ENCODE measurements at regions of chr4 and their contacts with region 1.

Region 1: GRCh38 chr4:153791746-153792617 is 3.1 kb upstream of the SFRP2 start:
- DNase-seq: peak; percentile 77
- ATAC-seq: peak; percentile 22
- H3K4me3 Mint-ChIP-seq: peak overlapping the region; percentile 67
- H3K27ac Mint-ChIP-seq: no peak overlapping the region
- H3K4me1 Mint-ChIP-seq: peaks cover 45% of the 10 kb centered on the region
- H3K27me3 Mint-ChIP-seq: peaks cover 79% of the 10 kb centered on the region

Region 2: GRCh38 chr4:153940916-153941315 is 148.9 kb after region 1 on chr4:
- CTCF ChIA-PET with region 1: no interaction called
- POLR2A ChIA-PET with region 1: no interaction called
- intact Hi-C with region 1: loop called in 1 of 2 experiments (anchors 5 kb)
- DNase-seq: no peak
- ATAC-seq: no peak
- H3K4me3 Mint-ChIP-seq: no peak overlapping the region
- H3K27ac Mint-ChIP-seq: no peak overlapping the region
- H3K4me1 Mint-ChIP-seq: peaks cover 15% of the 10 kb centered on the region
- H3K27me3 Mint-ChIP-seq: peaks cover 41% of the 10 kb centered on the region

Region 3: DNA sequence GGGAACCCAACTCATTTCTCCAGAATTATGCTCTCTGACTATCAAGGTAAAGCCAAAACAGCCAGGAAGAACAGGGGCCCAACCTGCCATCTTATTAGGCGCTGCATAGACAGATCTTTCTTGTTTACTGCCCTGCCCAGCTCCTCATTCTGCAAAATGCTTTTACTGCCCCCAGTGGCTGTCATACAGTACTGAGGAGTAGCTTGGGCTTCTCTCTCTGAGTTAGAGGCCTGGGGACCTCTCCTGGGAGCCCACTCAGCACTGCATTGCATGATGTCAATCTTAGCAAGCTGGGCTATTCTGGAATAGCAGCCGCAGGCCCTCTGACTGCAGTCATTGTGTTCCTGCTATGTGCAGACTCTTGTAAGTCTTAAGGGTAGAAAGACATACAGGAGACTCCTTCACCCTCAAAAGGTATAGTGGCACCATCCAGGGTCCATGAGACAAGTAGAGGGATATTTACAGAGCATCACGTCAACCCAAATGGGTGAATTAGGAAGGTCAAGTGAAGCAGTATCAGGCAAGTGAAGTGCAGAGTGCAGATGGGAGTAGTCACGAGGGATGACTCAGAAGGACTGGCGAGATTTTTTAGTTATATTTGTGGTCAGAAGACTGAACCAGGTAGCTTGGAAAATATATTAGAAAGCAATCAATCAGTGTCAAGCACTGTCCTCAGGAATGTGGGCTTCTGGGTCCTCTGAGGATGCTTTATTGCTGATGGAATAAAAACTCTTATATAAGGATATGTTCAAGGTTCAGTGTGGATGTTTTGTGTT is 291.0 kb after region 1 on chr4:
- CTCF ChIA-PET with region 1: interaction called, 4 read pairs
- POLR2A ChIA-PET with region 1: interaction called, 3 read pairs
- intact Hi-C with region 1: loop called in 1 of 2 experiments (anchors 2 kb)
- DNase-seq: peak; percentile 25
- ATAC-seq: peak; percentile 61
- H3K4me3 Mint-ChIP-seq: no peak overlapping the region
- H3K27ac Mint-ChIP-seq: no peak overlapping the region
- H3K4me1 Mint-ChIP-seq: no peaks in the 10 kb centered on the region
- H3K27me3 Mint-ChIP-seq: peaks cover 10% of the 10 kb centered on the region

Region 4: GRCh38 chr4:154332681-154333421 is 540.9 kb after region 1 on chr4:
- CTCF ChIA-PET with region 1: no interaction called
- POLR2A ChIA-PET with region 1: no interaction called
- intact Hi-C with region 1: loop called in 1 of 2 experiments (anchors 5 kb)
- DNase-seq: peak; percentile 82
- ATAC-seq: peak; percentile 95
- H3K4me3 Mint-ChIP-seq: peak overlapping the region; percentile 68
- H3K27ac Mint-ChIP-seq: peak overlapping the region; percentile 61
- H3K4me1 Mint-ChIP-seq: peaks cover 11% of the 10 kb centered on the region
- H3K27me3 Mint-ChIP-seq: peaks cover 19% of the 10 kb centered on the region

Region 5: GRCh38 chr4:155376387-155377268 is 1584.6 kb after region 1 on chr4 and contains the start of gene MAP9:
- CTCF ChIA-PET with region 1: no interaction called
- POLR2A ChIA-PET with region 1: no interaction called
- intact Hi-C with region 1: loop called in 1 of 2 experiments (anchors 10 kb)
- DNase-seq: peak; percentile 94
- ATAC-seq: peak; percentile 96
- H3K4me3 Mint-ChIP-seq: peak within 1 kb of the TSS; percentile 83
- H3K27ac Mint-ChIP-seq: peak within 1 kb of the TSS; percentile 79
- H3K4me1 Mint-ChIP-seq: peaks cover 16% of the 10 kb centered on the region
- H3K27me3 Mint-ChIP-seq: no peaks in the 10 kb centered on the region
- total RNA-seq, gene MAP9: 8.0 to 8.1 TPM